Dorsolateral prefrontal cortex (tissue), 120 donors: ENCODE measurements at regions of chr20 and their contacts with region 1.

Region 1: DNA sequence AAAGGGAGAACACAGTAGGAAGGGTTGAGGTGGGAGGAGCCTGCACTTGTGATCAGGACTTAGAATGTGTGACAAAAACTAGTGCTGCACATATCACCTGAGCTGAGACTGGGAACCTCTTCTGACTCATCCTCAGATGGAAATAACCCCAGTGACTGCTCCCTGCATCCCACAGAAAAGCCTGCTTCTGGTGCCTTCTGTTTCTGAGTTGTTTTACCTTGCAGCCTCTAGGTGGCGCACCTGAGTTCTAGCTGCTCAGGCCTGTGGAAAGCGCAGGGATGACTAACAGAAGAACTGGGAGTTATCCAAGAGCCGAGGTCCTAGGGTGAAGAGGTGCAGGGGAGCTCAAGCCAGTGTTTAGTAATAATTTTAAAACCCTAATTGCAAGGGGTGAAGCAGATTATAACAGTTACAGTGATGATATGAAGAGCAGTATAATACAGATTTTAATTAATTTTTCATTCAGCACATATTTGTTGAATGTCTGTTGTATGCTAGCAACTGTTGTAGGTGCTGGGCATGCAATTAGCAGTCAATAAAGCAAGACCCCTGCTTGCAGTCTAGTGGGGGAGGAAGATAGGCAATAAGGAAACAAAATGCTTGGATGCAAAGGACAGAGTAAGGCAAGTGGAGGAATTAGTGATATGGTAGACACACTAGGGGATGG is 302.5 kb downstream of the DHX35 start:
- DNase-seq: peak in 8 of 10 donors; percentile 39 to 68 (median 64)
- H3K4me3 ChIP-seq: no peak overlapping the region
- H3K27ac ChIP-seq: no peak overlapping the region
- H3K27me3 ChIP-seq: peaks cover 0 to 18% (median 0%) of the 10 kb centered on the region in 45 donors
- CTCF ChIP-seq: peak; percentile 42 to 92 (median 82)

Region 2: DNA sequence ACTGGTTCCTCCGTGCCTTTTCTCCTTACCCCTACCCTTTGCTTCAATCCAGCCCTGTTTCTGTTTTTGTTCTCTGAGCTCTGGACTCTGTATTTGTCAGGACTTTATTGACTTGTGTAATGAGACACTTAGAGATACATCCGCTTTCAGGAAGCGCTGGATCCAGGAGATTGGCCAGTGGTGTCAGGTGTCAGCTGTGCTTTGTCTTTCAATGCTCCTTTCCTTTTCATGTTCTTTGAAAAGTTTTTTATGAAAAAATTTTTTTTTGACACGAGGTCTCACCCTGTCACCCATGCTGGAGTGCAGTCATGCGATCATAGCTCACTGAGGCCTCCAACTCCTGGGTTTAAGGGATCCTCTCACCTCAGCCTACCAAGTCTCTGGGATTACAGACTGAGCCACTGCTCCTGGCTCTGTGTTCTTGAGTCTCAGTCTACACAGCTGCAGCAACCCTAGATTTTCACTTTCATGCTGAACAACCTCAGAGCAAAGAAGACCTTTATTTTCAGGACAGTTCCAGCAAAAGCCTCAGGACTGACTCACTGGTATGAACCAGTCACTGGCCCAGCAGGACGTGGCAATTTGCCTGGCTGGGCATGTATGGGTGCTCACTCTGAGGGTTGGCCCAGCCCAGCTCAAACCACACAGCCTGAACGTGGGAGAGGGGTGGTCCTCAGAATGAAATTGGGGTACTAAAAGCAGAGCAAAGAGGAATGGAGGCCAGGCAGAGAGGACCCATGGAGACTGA is 194.0 kb before region 1 on chr20:
- intact Hi-C with region 1: no loop called
- DNase-seq: no peak
- H3K4me3 ChIP-seq: no peak overlapping the region
- H3K27ac ChIP-seq: no peak overlapping the region
- H3K27me3 ChIP-seq: peaks cover 0 to 6% (median 0%) of the 10 kb centered on the region in 45 donors
- CTCF ChIP-seq: no peak

Region 3: GRCh38 chr20:39310363-39310995 is 45.8 kb after region 1 on chr20:
- intact Hi-C with region 1: no loop called
- DNase-seq: no peak
- H3K4me3 ChIP-seq: no peak overlapping the region
- H3K27ac ChIP-seq: peak overlapping the region in 5 of 59 donors; percentile 13 to 52 (median 22)
- H3K27me3 ChIP-seq: peaks cover 0 to 16% (median 0%) of the 10 kb centered on the region in 45 donors
- CTCF ChIP-seq: no peak

Region 4: DNA sequence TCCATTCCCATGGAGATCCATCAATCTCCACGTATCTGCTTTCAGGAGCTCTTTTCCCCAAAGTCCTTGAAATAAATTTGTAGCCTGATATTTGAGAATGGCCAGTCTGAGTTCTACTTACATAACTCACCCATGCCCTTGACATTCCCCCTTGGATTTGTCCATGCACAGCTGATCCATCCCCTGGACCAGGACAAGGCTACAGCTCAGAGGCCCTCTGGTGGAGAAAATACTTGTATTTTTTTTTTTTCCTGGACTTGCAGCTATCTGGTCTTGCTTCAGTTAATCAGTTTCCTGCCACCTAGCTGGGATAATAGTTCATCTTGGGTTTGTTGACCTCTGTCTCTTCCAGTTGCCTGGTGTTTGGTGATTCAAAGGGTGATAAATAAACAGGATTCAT is 165.1 kb after region 1 on chr20:
- intact Hi-C with region 1: loop called in 1 of 2 experiments (anchors 5 kb)
- DNase-seq: no peak
- H3K4me3 ChIP-seq: no peak overlapping the region
- H3K27ac ChIP-seq: no peak overlapping the region
- H3K27me3 ChIP-seq: peaks cover 0 to 2% (median 0%) of the 10 kb centered on the region in 45 donors
- CTCF ChIP-seq: peak in 51 of 56 donors; percentile 13 to 67 (median 42)

Region 5: GRCh38 chr20:39813190-39813829 is 548.7 kb after region 1 on chr20:
- intact Hi-C with region 1: loop called in 1 of 2 experiments (anchors 10 kb)
- DNase-seq: peak in 2 of 10 donors; percentile 31 to 35
- H3K4me3 ChIP-seq: no peak overlapping the region
- H3K27ac ChIP-seq: peak overlapping the region in 5 of 59 donors; percentile 14 to 48 (median 41)
- H3K27me3 ChIP-seq: peaks cover 0 to 3% (median 0%) of the 10 kb centered on the region in 45 donors
- CTCF ChIP-seq: no peak

Region 6: GRCh38 chr20:39874049-39874888 is 609.6 kb after region 1 on chr20:
- intact Hi-C with region 1: loop called in 1 of 2 experiments (anchors 5 kb)
- DNase-seq: peak in 7 of 10 donors; percentile 4 to 55 (median 31)
- H3K4me3 ChIP-seq: no peak overlapping the region
- H3K27ac ChIP-seq: no peak overlapping the region
- H3K27me3 ChIP-seq: peaks cover 0 to 23% (median 0%) of the 10 kb centered on the region in 45 donors
- CTCF ChIP-seq: peak in 55 of 56 donors; percentile 37 to 79 (median 68)

Region 7: GRCh38 chr20:40689943-40690835 is 1425.5 kb after region 1 on chr20:
- intact Hi-C with region 1: loop called (anchors 5 kb)
- DNase-seq: peak; percentile 63 to 93 (median 89)
- H3K4me3 ChIP-seq: peak overlapping the region; percentile 50 to 82 (median 68)
- H3K27ac ChIP-seq: peak overlapping the region; percentile 84 to 99 (median 96)
- H3K27me3 ChIP-seq: peaks cover 0 to 73% (median 45%) of the 10 kb centered on the region in 45 donors
- CTCF ChIP-seq: peak; percentile 79 to 98 (median 93)

Region 8: GRCh38 chr20:40962730-40963504 is 1698.3 kb after region 1 on chr20:
- intact Hi-C with region 1: loop called in 1 of 2 experiments (anchors 10 kb)
- DNase-seq: peak; percentile 55 to 84 (median 66)
- H3K4me3 ChIP-seq: peak overlapping the region in 1 of 59 donors; percentile 16
- H3K27ac ChIP-seq: no peak overlapping the region
- H3K27me3 ChIP-seq: no peaks in the 10 kb centered on the region
- CTCF ChIP-seq: peak; percentile 83 to 97 (median 94)